Activated T-helper 2 cell treated with anti-CD3 and anti-CD28 coated beads, Interferon-gamma antibody, Interleukin-2, Interleukin-4, amounts not matched to agents 10 μg/mL and 5 μg/mL and 100 μg/mL, durations not matched to agents 14 hours and 24 hours and 36 hours (primary cell): ENCODE measurements at regions of chr12 and their contacts with region 1.

Region 1: GRCh38 chr12:57229634-57230380 is at the start of gene SHMT2:
- DNase-seq: peak; percentile 90
- H3K4me3 Mint-ChIP-seq: peak within 1 kb of the TSS; percentile 97
- H3K27ac Mint-ChIP-seq: peak within 1 kb of the TSS; percentile 89
- H3K4me1 Mint-ChIP-seq: peaks cover 42% of the 10 kb centered on the region
- H3K27me3 Mint-ChIP-seq: peaks cover 13% of the 10 kb centered on the region
- total RNA-seq, gene SHMT2: 295 and 307 TPM in 2 replicates

Region 2: DNA sequence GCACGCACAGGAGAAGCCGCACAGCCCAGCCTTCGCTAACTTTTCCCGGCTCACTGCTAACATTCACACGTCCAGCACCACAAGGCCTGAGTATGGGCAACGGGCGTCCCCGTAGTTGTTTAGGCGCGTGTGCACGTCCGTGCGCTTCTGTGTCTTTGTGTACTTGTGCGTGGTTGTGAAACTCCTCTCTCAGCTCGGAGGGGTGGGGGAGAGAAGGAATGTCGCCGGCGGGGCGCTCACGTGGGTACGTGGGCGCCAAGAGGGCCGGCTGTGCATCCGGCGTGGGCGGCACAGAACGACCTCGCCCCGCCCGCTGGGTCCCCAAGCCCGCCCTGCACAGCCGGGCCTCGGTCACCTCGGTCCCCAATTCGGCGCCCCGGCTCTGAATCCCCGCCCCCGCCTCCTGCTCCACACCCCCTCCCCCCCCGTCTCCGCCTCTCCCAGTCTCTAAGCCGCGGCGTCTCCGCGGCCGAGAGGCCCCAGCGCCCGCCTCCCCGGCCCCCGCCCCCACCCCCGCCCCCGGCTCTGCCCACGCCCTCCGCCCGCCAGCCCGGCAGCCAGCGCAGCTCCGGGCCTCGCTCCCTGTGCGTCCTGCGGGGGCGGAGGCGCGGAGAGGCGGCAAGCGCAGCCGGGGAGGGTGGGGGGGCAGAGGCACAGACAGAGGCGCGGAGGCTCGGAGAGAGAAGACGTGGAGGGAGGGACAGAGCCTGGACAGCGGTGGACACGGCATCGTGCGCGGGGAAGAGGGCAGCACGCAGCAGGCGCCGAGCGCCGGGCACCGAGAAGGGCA is 141.2 kb before region 1 on chr12 and contains the start of gene NAB2:
- intact Hi-C with region 1: loop called (anchors 5 kb)
- DNase-seq: peak; percentile 91
- H3K4me3 Mint-ChIP-seq: peak within 1 kb of the TSS; percentile 99
- H3K27ac Mint-ChIP-seq: peak within 1 kb of the TSS; percentile 98
- H3K4me1 Mint-ChIP-seq: peaks cover 62% of the 10 kb centered on the region
- H3K27me3 Mint-ChIP-seq: no peaks in the 10 kb centered on the region
- total RNA-seq, gene NAB2: 72.8 and 74.7 TPM in 2 replicates

Region 3: DNA sequence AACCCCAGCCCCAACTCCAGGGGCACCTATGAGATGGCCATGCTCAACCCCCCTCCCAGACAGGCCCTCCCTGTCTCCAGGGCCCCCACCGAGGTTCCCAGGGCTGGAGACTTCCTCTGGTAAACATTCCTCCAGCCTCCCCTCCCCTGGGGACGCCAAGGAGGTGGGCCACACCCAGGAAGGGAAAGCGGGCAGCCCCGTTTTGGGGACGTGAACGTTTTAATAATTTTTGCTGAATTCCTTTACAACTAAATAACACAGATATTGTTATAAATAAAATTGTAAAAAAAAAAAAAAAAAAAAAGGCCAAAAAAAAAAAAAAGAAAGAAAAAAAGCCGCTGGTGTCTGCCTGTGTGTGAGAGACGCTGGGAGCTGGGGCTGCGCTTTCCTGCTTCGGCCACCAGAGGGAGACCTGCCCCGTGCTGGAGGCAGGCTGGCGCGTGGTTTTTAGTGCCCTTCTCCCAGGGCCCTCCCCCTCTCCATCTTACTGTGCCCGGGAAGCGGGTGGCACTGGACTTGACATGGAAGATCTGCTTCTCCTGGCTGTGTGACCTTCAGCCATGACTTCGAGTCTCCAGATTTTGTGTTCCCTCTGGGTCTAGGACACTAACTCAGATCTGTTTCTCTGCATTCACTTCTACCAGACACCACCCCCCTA is 16.6 kb before region 1 on chr12:
- intact Hi-C with region 1: loop called (anchors 1 kb)
- DNase-seq: peak; percentile 76
- H3K4me3 Mint-ChIP-seq: no peak overlapping the region
- H3K27ac Mint-ChIP-seq: no peak overlapping the region
- H3K4me1 Mint-ChIP-seq: peaks cover 30% of the 10 kb centered on the region
- H3K27me3 Mint-ChIP-seq: peaks cover 38% of the 10 kb centered on the region

Region 4: DNA sequence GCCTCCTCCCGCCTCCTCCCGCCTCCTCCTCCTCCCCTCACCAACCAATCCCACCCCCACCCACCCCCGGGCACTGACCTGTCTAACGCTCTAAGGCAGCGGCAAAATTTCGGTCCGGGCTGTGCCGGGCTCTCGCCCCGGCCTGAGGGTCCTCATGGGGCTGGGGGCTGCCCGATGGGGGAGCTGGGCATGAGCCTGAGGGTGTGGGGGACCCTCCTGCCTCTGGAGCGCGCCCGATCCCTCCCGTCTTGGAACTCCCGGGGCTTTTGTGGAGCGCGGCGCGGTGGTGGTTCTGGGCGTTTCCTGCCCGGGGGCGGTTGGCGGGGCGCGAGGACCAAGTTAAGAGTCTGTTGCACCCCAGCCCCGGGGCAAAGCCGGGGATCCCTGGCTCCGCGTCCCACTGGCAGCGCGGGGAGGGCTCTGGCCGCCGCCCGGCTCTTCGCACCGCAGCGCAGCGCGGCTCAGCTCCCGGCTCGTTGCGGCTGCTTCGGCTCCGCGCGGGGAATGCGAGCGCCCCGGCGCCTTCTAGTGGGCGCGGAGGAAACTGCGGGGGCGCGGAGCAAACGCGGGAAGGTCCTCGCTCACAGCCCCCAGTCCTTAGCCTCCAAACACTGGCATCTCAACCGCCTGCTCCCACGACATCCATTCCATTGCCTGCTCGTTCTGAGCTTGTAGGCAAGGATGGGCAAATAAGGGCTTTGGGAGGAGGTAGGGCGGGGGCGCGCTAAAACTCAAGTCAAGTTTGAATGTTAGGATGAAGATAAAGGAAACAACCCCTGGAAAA is 403.1 kb after region 1 on chr12 and contains the start of gene B4GALNT1:
- intact Hi-C with region 1: loop called (anchors 5 kb)
- DNase-seq: peak; percentile 58
- H3K4me3 Mint-ChIP-seq: peak within 1 kb of the TSS; percentile 74
- H3K27ac Mint-ChIP-seq: no peak within 1 kb of the TSS
- H3K4me1 Mint-ChIP-seq: peaks cover 4% of the 10 kb centered on the region
- H3K27me3 Mint-ChIP-seq: peaks cover 62% of the 10 kb centered on the region
- total RNA-seq, gene B4GALNT1: 10.8 and 11.3 TPM in 2 replicates